Activated CD4-positive, alpha-beta memory T cell treated with anti-CD3 and anti-CD28 coated beads, Interleukin-2, amount 10 ng/mL, durations not matched to agents 7 days and 5 days (primary cell): ENCODE measurements at regions of chr16 and their contacts with region 1.

Region 1: GRCh38 chr16:85615852-85616606 is 2.9 kb downstream of the GSE1 start:
- DNase-seq: peak; percentile 76
- H3K4me3 Mint-ChIP-seq: no peak overlapping the region
- H3K27ac Mint-ChIP-seq: no peak overlapping the region
- H3K4me1 Mint-ChIP-seq: peaks cover 31% of the 10 kb centered on the region
- H3K27me3 Mint-ChIP-seq: peaks cover 7% of the 10 kb centered on the region

Region 2: GRCh38 chr16:85420501-85421337 is 195.3 kb before region 1 on chr16:
- CTCF ChIA-PET with region 1: interaction called, 44 read pairs
- POLR2A ChIA-PET with region 1: interaction called, 5 read pairs
- DNase-seq: peak; percentile 76
- H3K4me3 Mint-ChIP-seq: no peak overlapping the region
- H3K27ac Mint-ChIP-seq: no peak overlapping the region
- H3K4me1 Mint-ChIP-seq: peaks cover 2% of the 10 kb centered on the region
- H3K27me3 Mint-ChIP-seq: no peaks in the 10 kb centered on the region

Region 3: GRCh38 chr16:85554112-85554813 is 61.8 kb before region 1 on chr16:
- CTCF ChIA-PET with region 1: interaction called, 25 read pairs
- POLR2A ChIA-PET with region 1: interaction called, 41 read pairs
- DNase-seq: peak; percentile 89
- H3K4me3 Mint-ChIP-seq: peak overlapping the region; percentile 93
- H3K27ac Mint-ChIP-seq: peak overlapping the region; percentile 98
- H3K4me1 Mint-ChIP-seq: peaks cover 38% of the 10 kb centered on the region
- H3K27me3 Mint-ChIP-seq: peaks cover 5% of the 10 kb centered on the region

Region 4: GRCh38 chr16:85626191-85626981 is 10.4 kb after region 1 on chr16:
- CTCF ChIA-PET with region 1: interaction called, 20 read pairs
- POLR2A ChIA-PET with region 1: interaction called, 5 read pairs
- DNase-seq: no peak
- H3K4me3 Mint-ChIP-seq: no peak overlapping the region
- H3K27ac Mint-ChIP-seq: no peak overlapping the region
- H3K4me1 Mint-ChIP-seq: peaks cover 4% of the 10 kb centered on the region
- H3K27me3 Mint-ChIP-seq: no peaks in the 10 kb centered on the region